Prostate gland (tissue), 2 donors: ENCODE measurements at regions of chr7 and their contacts with region 1.

Region 1: DNA sequence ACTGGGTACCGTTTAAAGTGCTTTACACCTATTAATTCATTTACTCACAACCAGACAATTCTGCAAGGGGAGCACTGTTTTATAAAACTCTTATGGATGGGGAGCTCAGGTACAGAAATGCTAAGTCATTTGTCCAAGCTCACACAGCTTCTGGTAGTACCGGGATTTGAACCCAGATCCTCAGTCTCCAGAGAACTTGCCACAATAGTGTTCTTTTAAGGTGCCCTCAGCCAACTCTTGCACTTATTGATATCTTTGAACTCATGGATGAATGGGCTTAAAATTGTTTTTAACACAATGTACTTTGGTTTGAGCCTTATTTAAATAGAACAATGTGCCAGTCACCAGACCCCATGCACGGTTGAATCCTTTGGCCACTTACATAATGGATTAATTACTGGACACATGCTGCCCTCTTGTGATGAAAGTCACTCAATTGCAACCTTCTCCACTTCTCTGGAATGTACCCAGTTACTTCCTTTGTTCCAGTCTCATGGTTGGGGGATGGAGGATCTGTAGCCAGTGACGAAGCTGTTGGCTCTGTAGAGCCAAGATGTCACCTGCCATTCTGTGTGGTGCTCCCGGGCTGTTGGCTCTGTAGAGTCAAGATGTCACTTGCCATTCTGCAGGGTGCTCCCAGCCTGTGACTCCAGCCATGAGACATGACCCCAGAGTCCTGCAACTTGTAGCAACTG is 65.6 kb downstream of the NOD1 start:
- DNase-seq: peak; percentile 55
- H3K4me3 ChIP-seq: no peak overlapping the region
- H3K27ac ChIP-seq: no peak overlapping the region
- H3K4me1 ChIP-seq: no peaks in the 10 kb centered on the region
- H3K27me3 ChIP-seq: no peaks in the 10 kb centered on the region
- CTCF ChIP-seq: peak; percentile 27 to 77 (median 64)
- POLR2A ChIP-seq: no peak

Region 2: GRCh38 chr7:30105208-30105607 is 307.7 kb before region 1 on chr7:
- intact Hi-C with region 1: no loop called
- DNase-seq: no peak
- H3K4me3 ChIP-seq: no peak overlapping the region
- H3K27ac ChIP-seq: no peak overlapping the region
- H3K4me1 ChIP-seq: no peaks in the 10 kb centered on the region
- H3K27me3 ChIP-seq: no peaks in the 10 kb centered on the region
- CTCF ChIP-seq: no peak
- POLR2A ChIP-seq: no peak

Region 3: GRCh38 chr7:30163231-30163894 is 249.6 kb before region 1 on chr7:
- intact Hi-C with region 1: loop called (anchors 2 kb)
- DNase-seq: no peak
- H3K4me3 ChIP-seq: no peak overlapping the region
- H3K27ac ChIP-seq: no peak overlapping the region
- H3K4me1 ChIP-seq: peaks cover 18% of the 10 kb centered on the region
- H3K27me3 ChIP-seq: no peaks in the 10 kb centered on the region
- CTCF ChIP-seq: no peak
- POLR2A ChIP-seq: no peak

Region 4: GRCh38 chr7:30263090-30263710 is 149.8 kb before region 1 on chr7:
- intact Hi-C with region 1: no loop called
- DNase-seq: no peak
- H3K4me3 ChIP-seq: no peak overlapping the region
- H3K27ac ChIP-seq: no peak overlapping the region
- H3K4me1 ChIP-seq: no peaks in the 10 kb centered on the region
- H3K27me3 ChIP-seq: no peaks in the 10 kb centered on the region
- CTCF ChIP-seq: no peak
- POLR2A ChIP-seq: no peak

Region 5: DNA sequence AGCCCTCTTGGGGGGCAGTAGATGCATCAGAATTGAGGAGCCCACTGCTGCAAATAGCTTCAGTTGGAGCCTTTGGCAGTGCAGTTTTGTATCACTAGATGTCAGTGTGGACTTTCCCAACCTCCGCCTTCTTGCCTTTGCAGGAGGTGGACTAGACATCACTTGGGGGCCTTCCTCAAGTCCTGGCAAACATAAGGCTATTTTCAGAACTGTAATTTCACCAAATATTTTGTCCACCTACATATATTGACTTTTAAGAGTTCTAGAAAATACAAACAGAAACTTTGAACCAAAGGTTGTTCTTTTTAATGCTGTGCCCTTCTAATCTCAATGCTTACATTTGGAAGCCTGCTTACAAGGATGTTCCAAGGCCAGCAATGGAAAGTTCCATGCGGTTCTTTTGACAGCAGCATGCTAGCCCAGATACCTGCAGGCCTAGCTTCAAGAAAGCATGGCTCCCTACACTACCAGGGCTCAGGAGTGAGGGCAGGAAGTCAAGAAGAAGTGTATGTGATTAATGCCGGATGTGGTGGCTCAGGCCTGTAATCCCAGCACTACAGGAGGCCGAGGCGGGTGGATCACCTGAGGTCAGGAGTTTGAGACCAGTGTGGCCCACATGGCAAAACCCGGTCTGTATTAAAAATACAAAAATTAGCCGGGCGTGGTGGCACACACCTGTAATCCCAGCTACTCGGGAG is 136.6 kb before region 1 on chr7:
- intact Hi-C with region 1: loop called (anchors 1 kb)
- DNase-seq: no peak
- H3K4me3 ChIP-seq: no peak overlapping the region
- H3K27ac ChIP-seq: no peak overlapping the region
- H3K4me1 ChIP-seq: no peaks in the 10 kb centered on the region
- H3K27me3 ChIP-seq: no peaks in the 10 kb centered on the region
- CTCF ChIP-seq: peak in 2 of 4 experiments; percentile 51
- POLR2A ChIP-seq: no peak

Region 6: GRCh38 chr7:30831227-30831626 is 418.3 kb after region 1 on chr7:
- intact Hi-C with region 1: no loop called
- DNase-seq: no peak
- H3K4me3 ChIP-seq: no peak overlapping the region
- H3K27ac ChIP-seq: no peak overlapping the region
- H3K4me1 ChIP-seq: no peaks in the 10 kb centered on the region
- H3K27me3 ChIP-seq: no peaks in the 10 kb centered on the region
- CTCF ChIP-seq: no peak
- POLR2A ChIP-seq: no peak

Region 7: DNA sequence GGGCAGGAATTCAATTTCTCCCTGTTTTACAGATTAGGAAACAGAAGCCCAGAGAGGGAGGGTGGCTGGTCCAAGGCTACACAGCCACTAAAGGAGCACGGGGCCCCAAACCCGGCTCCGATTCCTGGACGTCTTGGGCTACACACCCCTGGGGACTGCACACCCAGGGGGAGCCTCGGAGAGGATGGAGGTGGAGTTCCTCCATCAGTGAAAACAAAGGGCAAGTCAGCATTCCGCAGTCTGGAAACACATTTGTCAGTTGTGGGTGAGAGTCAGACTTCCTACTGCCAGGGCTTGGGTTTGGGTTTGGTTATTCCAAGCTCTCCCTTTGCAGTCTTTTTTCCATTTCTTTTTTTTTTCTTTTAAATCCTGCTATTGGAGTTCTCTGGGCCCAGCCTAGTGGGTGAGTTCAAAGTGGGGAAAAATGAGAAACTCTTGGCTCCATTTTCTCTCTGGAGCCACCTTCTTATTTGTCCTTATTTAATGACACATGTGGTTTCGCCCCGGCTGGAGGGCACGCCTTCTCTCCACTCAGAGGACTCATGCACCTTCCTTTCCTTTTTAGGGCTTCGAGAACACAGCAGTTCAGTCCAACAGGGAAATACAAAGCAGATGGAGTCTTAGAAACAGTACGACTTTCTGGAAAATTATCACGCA is 438.8 kb after region 1 on chr7:
- intact Hi-C with region 1: no loop called
- DNase-seq: no peak
- H3K4me3 ChIP-seq: no peak overlapping the region
- H3K27ac ChIP-seq: peak overlapping the region; percentile 20 to 41
- H3K4me1 ChIP-seq: no peaks in the 10 kb centered on the region
- H3K27me3 ChIP-seq: no peaks in the 10 kb centered on the region
- CTCF ChIP-seq: no peak
- POLR2A ChIP-seq: no peak